GM10248 (cell line): ENCODE measurements at regions of chr10 and their contacts with region 1.

Region 1: GRCh38 chr10:60816628-60817397 is 38.5 kb downstream of the CDK1 start:
- DNase-seq: peak; percentile 60
- CTCF ChIP-seq: peak; percentile 84

Region 2: DNA sequence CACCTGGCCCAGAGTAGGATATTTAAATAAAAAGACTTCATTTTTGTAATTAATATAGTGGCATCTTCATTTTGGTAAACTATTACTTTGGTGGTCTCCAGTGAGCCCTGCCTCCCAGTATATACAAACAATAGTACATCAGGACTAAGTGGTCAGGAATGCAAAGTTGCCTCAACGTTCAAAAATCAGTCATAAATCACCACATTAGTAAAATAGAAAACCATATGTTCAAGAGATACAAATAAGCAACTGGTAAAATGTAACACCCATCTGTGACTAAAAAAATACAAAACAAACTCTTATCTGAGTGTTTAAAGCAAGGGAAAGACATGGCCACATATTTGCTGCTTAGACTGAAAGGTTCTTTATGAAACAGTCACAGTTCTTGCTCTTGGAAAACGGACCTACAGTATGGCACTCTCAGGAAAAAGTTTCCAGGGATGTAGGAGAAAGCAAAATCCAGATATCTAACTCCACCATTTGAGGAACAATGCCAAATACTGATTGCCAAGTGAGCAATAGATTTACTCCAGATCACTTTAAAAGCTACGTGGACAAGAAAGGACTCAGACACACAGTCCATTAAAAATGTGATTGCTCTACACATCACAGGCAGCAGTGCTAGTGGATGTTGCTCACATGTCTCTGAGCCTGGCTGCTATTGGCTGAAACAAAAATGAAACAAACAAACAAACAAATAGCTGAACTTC is 142.2 kb after region 1 on chr10:
- CTCF ChIA-PET with region 1: interaction called, 15 read pairs
- POLR2A ChIA-PET with region 1: no interaction called
- DNase-seq: no peak
- CTCF ChIP-seq: no peak

Region 3: GRCh38 chr10:60964257-60965235 is 147.7 kb after region 1 on chr10:
- CTCF ChIA-PET with region 1: interaction called, 15 read pairs
- POLR2A ChIA-PET with region 1: no interaction called
- DNase-seq: peak; percentile 27
- CTCF ChIP-seq: peak; percentile 67